Activated T-helper 2 cell treated with anti-CD3 and anti-CD28 coated beads, Interferon-gamma antibody, Interleukin-2, Interleukin-4, amounts not matched to agents 10 μg/mL and 5 μg/mL and 100 μg/mL, durations not matched to agents 14 hours and 24 hours and 36 hours (primary cell): ENCODE measurements at regions of chr12 and their contacts with region 1.

Region 1: GRCh38 chr12:94101738-94102660 is 46.4 kb upstream of the PLXNC1 start:
- DNase-seq: peak; percentile 81
- H3K4me3 Mint-ChIP-seq: peak overlapping the region; percentile 77
- H3K27ac Mint-ChIP-seq: peak overlapping the region; percentile 62
- H3K4me1 Mint-ChIP-seq: peaks cover 35% of the 10 kb centered on the region
- H3K27me3 Mint-ChIP-seq: peaks cover 2% of the 10 kb centered on the region

Region 2: GRCh38 chr12:92784795-92785562 is 1317.0 kb before region 1 on chr12:
- intact Hi-C with region 1: loop called (anchors 10 kb)
- DNase-seq: no peak
- H3K4me3 Mint-ChIP-seq: no peak overlapping the region
- H3K27ac Mint-ChIP-seq: no peak overlapping the region
- H3K4me1 Mint-ChIP-seq: peaks cover 1% of the 10 kb centered on the region
- H3K27me3 Mint-ChIP-seq: no peaks in the 10 kb centered on the region

Region 3: GRCh38 chr12:93502802-93503623 is 599.0 kb before region 1 on chr12:
- intact Hi-C with region 1: loop called (anchors 1 kb)
- DNase-seq: peak; percentile 26
- H3K4me3 Mint-ChIP-seq: no peak overlapping the region
- H3K27ac Mint-ChIP-seq: no peak overlapping the region
- H3K4me1 Mint-ChIP-seq: peaks cover 15% of the 10 kb centered on the region
- H3K27me3 Mint-ChIP-seq: no peaks in the 10 kb centered on the region

Region 4: DNA sequence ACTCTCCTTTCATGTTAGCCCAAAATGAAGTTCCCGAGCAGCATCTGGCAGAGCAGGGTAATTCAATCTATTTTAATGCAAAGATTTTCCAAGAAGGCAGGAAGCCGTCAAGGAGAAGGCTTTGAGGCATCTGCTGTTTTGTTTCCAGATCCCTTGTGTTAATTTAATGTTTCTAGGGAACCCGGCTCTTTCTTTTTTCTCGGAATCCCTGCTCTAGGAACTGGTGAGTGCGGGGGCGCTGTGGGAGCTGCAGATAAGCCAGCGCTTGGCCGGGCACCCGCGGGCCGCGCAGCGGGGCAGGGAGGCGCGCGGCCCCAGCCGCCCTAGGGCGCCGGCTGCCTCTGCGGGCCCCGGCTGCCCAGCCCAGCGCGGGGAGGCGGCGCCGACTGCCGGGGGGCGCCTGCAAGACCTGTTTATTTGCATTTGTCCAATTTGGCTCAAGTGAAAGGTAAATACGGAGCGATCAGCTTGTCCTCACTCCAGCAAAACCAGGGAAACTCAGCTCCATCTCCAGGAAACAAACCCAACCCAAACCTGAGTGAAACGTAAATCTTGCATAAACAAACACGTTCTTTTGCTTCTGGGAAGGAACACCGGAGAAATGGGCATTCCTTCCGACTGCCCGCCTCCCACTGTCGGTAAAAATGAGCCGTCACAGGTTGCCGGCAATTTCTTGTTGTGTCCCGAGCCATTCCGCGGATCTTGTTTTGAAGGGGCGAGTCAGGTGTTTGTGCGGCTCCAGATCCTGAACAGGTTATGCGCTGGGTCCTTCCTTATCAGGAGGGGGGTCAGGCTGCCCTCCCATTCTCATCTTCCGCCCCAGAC is 359.7 kb before region 1 on chr12:
- intact Hi-C with region 1: loop called (anchors 1 kb)
- DNase-seq: peak; percentile 32
- H3K4me3 Mint-ChIP-seq: peak overlapping the region; percentile 82
- H3K27ac Mint-ChIP-seq: peak overlapping the region; percentile 79
- H3K4me1 Mint-ChIP-seq: peaks cover 30% of the 10 kb centered on the region
- H3K27me3 Mint-ChIP-seq: peaks cover 1% of the 10 kb centered on the region

Region 5: DNA sequence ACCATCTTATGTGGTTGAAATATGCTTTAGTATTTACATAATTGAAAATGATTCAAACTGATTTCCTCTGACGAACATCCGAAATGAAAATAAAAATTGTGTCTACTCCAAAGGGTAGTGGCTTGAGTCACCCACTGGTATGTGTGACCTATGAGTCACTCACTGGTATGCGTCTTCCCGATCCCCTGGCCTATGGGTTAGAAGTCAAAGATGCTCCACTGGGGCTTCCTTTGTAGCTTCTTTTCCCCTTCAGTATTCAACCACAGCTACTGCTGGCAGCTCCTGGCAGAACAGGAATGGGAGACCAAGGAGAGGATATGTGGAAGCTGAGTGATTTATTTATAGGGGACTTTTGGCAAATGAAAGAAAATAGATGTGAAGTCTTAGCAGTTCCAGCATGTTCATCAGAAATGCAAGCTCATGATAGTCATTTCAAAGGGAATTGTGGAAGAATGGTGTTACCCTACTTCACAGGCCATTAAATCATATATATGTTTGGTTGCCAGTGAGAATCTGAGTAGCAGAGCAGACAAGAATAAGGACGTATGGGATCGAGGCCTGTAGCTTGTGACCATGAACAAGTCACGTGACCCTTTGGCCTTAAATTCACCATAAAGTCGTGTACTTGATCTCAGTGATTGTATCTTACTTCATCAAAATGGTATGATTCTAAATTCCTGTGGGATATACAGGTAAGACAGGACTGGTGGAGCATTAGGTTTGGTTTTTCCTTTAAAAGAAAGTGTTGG is 316.6 kb before region 1 on chr12:
- intact Hi-C with region 1: loop called (anchors 5 kb)
- DNase-seq: peak; percentile 37
- H3K4me3 Mint-ChIP-seq: peak overlapping the region; percentile 50
- H3K27ac Mint-ChIP-seq: peak overlapping the region; percentile 92
- H3K4me1 Mint-ChIP-seq: peaks cover 55% of the 10 kb centered on the region
- H3K27me3 Mint-ChIP-seq: no peaks in the 10 kb centered on the region

Region 6: DNA sequence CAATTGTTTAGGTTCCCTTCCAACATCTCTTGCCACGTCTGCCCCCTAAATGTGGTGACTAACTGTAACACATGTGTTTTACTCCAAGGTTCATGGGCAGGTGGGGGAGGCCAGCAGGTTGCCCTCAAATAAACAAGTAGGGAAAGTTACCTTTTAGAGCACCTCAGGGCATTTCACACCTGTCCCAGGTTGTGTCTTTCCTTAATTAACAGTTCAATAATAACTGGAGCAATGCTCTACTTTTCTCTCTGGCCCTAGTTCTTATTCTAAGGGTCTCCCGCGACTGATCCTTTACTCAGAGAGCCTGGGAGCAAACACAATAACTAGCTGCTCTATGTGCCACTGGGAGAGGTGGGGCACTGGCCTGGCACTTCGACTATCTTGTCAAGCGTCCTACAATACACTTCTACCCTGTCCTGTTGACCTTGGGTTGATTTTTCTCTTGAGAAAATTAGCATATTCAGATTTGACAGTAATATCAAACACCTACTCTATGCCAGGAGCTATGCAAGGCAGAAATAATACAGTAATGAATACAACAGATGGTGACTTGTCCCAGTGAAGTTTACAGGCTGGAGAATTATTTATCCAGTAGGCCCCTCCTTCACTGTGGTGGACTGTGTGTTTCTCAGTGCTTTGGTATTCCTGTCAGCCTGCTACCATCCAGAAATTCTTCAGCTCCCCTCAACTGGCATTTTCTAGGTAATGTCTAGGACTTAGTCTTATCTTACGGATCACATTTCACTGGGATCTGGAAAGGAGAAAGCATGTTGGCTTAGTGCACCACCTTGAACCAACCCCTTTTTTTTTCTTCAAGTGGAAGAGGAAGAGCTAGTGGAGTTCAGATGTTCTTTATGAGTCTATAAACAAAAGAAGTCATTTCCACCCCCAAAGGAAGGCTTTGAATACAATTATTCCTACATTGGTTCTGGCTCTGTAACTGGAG is 222.2 kb before region 1 on chr12:
- intact Hi-C with region 1: loop called (anchors 1 kb)
- DNase-seq: no peak
- H3K4me3 Mint-ChIP-seq: no peak overlapping the region
- H3K27ac Mint-ChIP-seq: peak overlapping the region; percentile 78
- H3K4me1 Mint-ChIP-seq: peaks cover 24% of the 10 kb centered on the region
- H3K27me3 Mint-ChIP-seq: peaks cover 4% of the 10 kb centered on the region